Calu3 (cell line): ENCODE measurements at regions of chr11 and their contacts with region 1.

Region 1: GRCh38 chr11:16924826-16925560 is 89.2 kb downstream of the PLEKHA7 start:
- DNase-seq: peak; percentile 93
- H3K4me3 Mint-ChIP-seq: peak overlapping the region; percentile 95
- H3K27ac Mint-ChIP-seq: peak overlapping the region; percentile 87
- H3K4me1 Mint-ChIP-seq: peaks cover 57% of the 10 kb centered on the region
- H3K27me3 Mint-ChIP-seq: no peaks in the 10 kb centered on the region
- CTCF ChIP-seq: no peak

Region 2: GRCh38 chr11:16820324-16821092 is 104.5 kb before region 1 on chr11:
- CTCF ChIA-PET with region 1: interaction called, 4 read pairs
- intact Hi-C with region 1: loop called (anchors 5 kb)
- DNase-seq: peak; percentile 71
- H3K4me3 Mint-ChIP-seq: peak overlapping the region; percentile 26
- H3K27ac Mint-ChIP-seq: peak overlapping the region; percentile 37
- H3K4me1 Mint-ChIP-seq: peaks cover 62% of the 10 kb centered on the region
- H3K27me3 Mint-ChIP-seq: no peaks in the 10 kb centered on the region
- CTCF ChIP-seq: peak; percentile 82

Region 3: GRCh38 chr11:16890442-16890841 is 34.6 kb before region 1 on chr11:
- CTCF ChIA-PET with region 1: no interaction called
- intact Hi-C with region 1: loop called (anchors 1 kb)
- DNase-seq: no peak
- H3K4me3 Mint-ChIP-seq: peak overlapping the region; percentile 36
- H3K27ac Mint-ChIP-seq: peak overlapping the region; percentile 96
- H3K4me1 Mint-ChIP-seq: peaks cover 84% of the 10 kb centered on the region
- H3K27me3 Mint-ChIP-seq: no peaks in the 10 kb centered on the region
- CTCF ChIP-seq: no peak

Region 4: GRCh38 chr11:17221968-17222367 is 297.0 kb after region 1 on chr11:
- CTCF ChIA-PET with region 1: no interaction called
- intact Hi-C with region 1: no loop called
- DNase-seq: no peak
- H3K4me3 Mint-ChIP-seq: no peak overlapping the region
- H3K27ac Mint-ChIP-seq: no peak overlapping the region
- H3K4me1 Mint-ChIP-seq: peaks cover 21% of the 10 kb centered on the region
- H3K27me3 Mint-ChIP-seq: no peaks in the 10 kb centered on the region
- CTCF ChIP-seq: no peak